ENCODE measurements at regions of chr19 and their contacts with region 1.

Region 1: DNA sequence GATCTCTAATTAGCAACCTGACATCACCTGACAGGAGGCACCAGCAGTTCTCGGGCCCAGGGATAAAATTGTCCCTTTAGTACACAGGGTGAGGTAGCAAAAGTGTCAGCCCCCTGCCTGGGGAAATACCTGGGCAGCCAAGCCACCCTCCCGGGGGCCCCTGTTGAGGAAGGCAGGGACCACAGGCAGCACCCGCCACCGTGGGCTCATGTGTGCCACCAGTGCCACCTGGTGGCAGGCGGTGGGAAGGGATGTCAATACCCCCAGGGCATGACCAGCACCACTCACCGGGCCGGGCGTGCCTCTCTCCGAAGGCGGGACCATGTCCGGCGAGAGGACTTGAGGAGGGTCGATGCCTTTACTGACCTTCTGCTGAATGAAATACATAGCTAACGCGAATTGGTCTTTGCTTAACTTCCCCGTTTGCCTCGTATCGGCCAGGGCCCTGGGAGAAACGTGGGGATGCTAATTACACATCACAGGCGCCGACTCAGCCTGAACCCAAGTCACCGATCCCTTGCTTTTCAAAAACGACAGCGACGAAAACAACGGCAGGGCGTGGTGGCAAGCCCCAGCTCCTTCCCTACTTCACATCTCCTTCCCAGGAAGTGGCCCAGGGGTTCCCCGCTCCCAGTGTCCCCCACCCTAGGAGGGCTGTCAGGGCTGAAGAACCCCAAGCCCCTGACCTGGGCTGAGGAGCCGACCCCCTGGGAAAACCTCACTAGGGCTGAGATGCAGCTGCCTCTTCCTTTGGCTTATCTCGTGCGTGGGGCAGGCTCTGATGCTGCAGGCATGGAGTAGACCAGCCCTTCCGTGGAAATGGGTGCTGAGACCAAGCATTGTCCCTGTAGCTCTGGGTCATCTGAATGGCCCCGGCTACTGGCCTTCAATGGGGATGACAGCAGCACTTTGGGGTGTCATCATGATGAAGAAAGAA is 53.8 kb downstream of the EPS15L1 start:
- DNase-seq: peak; percentile 62 to 82 (median 66)
- ATAC-seq: peak; percentile 93
- H3K4me3 ChIP-seq: no peak overlapping the region
- H3K4me3 Mint-ChIP-seq: no peak overlapping the region
- H3K27ac ChIP-seq: no peak overlapping the region
- H3K27ac Mint-ChIP-seq: peak overlapping the region in 5 of 9 donors; percentile 28 to 72 (median 63)
- H3K4me1 ChIP-seq: no peaks in the 10 kb centered on the region
- H3K4me1 Mint-ChIP-seq: peaks cover 2 to 14% (median 6%) of the 10 kb centered on the region in 7 donors
- H3K27me3 ChIP-seq: no peaks in the 10 kb centered on the region
- H3K27me3 Mint-ChIP-seq: no peaks in the 10 kb centered on the region

Region 2: DNA sequence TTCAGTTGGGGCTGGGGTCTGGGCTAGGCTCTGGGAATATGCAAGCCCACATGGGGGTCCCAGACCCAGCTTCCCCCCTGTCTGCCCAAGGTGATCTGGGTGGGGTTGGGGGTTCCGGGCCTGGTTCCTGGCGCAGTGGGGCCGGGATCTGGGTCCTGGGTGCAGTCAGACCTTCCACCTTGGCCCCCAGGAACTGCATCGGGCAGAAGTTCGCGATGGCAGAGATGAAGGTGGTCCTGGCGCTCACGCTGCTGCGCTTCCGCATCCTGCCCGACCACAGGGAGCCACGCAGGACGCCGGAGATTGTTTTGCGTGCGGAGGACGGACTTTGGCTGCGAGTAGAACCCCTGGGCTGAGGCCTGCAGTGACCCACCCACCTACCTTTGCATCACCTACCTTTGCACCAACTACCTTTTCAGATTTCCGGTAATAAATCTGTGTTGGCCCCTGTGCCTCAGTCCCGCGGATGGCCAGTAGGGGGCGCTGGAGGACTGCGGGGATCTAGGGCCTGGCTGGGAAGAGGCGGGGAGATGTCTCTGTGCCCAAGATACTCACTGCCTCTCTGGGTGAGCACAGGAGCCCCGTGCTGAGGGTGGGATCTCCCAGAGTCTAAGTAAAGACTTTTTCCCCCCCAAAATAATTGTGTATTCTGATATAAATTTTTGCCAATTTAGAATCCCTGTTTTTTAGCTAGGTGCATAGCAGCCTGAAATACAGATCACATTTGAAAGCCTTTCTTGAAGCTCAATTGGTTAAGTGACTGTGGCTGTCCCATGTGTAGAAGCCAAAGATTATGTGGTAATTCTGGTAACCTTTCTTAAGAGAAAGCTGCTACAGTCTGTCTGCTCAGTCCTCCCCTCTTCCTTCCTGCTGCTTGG is 788.7 kb before region 1 on chr19:
- CTCF ChIA-PET with region 1: no interaction called
- POLR2A ChIA-PET with region 1: no interaction called
- intact Hi-C with region 1: loop called in 1 of 2 experiments (anchors 10 kb)
- DNase-seq: peak; percentile 74 to 94 (median 85)
- ATAC-seq: peak; percentile 98
- H3K4me3 ChIP-seq: no peak overlapping the region
- H3K4me3 Mint-ChIP-seq: peak overlapping the region in 2 of 10 donors; percentile 6 to 37
- H3K27ac ChIP-seq: no peak overlapping the region
- H3K27ac Mint-ChIP-seq: peak overlapping the region in 1 of 9 donors; percentile 67
- H3K4me1 ChIP-seq: peaks cover 0 to 6% of the 10 kb centered on the region in 2 donors
- H3K4me1 Mint-ChIP-seq: no peaks in the 10 kb centered on the region
- H3K27me3 ChIP-seq: no peaks in the 10 kb centered on the region
- H3K27me3 Mint-ChIP-seq: peaks cover 5 to 43% (median 32%) of the 10 kb centered on the region in 5 donors

Region 3: DNA sequence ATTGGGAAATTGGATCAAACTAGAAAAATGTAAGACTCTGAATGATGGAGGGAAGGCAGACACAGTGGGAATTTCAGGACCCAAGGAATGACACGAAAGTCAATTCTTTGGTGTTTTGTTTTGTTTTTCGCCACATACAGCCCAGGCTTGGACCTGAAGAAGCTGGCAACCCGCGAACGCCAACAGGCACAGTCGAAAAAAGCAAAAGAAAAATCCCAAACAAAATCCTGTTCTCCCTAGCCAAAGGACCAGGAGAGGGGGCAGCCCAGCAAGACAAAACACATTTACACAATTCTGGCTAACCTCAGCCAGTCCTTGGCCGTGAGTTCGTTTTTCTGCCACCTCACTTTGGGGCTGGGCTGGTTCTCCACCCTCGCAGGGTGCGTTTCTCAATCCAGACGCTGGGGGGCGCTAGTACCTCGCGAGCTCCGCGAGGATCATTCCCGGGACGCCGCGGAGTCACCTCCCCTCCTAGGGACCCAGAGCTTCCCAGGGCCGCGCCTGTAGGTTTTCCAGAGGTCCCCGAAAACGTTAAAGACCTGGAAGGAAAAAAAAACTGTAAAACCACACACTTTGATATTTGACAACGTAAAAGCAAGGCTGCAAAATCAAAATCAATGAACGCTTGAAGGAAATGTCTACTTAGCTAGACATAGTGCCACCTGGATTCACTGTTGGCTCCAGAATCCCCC is 376.5 kb before region 1 on chr19:
- CTCF ChIA-PET with region 1: interaction called, 6 read pairs
- POLR2A ChIA-PET with region 1: interaction called, 4 read pairs
- intact Hi-C with region 1: loop called (anchors 1 kb)
- DNase-seq: peak; percentile 47 to 85 (median 67)
- ATAC-seq: peak; percentile 90
- H3K4me3 ChIP-seq: no peak overlapping the region
- H3K4me3 Mint-ChIP-seq: peak overlapping the region; percentile 23 to 76 (median 50)
- H3K27ac ChIP-seq: no peak overlapping the region
- H3K27ac Mint-ChIP-seq: peak overlapping the region in 2 of 9 donors; percentile 15 to 49
- H3K4me1 ChIP-seq: peaks cover 0 to 7% of the 10 kb centered on the region in 2 donors
- H3K4me1 Mint-ChIP-seq: peaks cover 6 to 22% (median 15%) of the 10 kb centered on the region in 7 donors
- H3K27me3 ChIP-seq: no peaks in the 10 kb centered on the region
- H3K27me3 Mint-ChIP-seq: peaks cover 0 to 23% (median 0%) of the 10 kb centered on the region in 5 donors

Region 4: DNA sequence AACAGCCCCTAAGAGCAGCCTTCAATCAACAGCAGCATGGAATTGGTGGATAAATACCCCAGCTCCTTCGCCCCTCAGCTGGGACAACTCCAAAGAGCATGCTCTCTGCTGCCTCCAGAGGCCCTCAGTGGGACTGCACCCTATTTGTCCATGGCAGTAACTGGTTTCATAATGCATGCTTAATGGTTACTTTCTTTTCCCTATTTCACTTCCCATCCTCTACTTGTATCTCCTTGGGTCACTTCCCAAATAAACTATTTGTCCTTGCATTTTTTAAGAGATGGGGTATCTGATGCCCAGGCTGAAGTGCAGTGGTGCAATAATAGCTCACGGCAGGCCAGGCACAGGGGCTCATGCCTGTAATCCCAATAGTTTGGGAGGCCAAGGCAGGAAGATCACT is 355.1 kb before region 1 on chr19:
- CTCF ChIA-PET with region 1: interaction called, 4 read pairs
- POLR2A ChIA-PET with region 1: no interaction called
- intact Hi-C with region 1: loop called in 1 of 2 experiments (anchors 1 kb)
- DNase-seq: peak; percentile 32 to 77 (median 63)
- ATAC-seq: peak; percentile 89
- H3K4me3 ChIP-seq: no peak overlapping the region
- H3K4me3 Mint-ChIP-seq: peak overlapping the region in 1 of 10 donors; percentile 37
- H3K27ac ChIP-seq: no peak overlapping the region
- H3K27ac Mint-ChIP-seq: peak overlapping the region in 2 of 9 donors; percentile 3 to 24
- H3K4me1 ChIP-seq: peaks cover 0 to 4% of the 10 kb centered on the region in 2 donors
- H3K4me1 Mint-ChIP-seq: peaks cover 15 to 27% (median 21%) of the 10 kb centered on the region in 7 donors
- H3K27me3 ChIP-seq: no peaks in the 10 kb centered on the region
- H3K27me3 Mint-ChIP-seq: peaks cover 0 to 10% (median 0%) of the 10 kb centered on the region in 5 donors

Region 5: DNA sequence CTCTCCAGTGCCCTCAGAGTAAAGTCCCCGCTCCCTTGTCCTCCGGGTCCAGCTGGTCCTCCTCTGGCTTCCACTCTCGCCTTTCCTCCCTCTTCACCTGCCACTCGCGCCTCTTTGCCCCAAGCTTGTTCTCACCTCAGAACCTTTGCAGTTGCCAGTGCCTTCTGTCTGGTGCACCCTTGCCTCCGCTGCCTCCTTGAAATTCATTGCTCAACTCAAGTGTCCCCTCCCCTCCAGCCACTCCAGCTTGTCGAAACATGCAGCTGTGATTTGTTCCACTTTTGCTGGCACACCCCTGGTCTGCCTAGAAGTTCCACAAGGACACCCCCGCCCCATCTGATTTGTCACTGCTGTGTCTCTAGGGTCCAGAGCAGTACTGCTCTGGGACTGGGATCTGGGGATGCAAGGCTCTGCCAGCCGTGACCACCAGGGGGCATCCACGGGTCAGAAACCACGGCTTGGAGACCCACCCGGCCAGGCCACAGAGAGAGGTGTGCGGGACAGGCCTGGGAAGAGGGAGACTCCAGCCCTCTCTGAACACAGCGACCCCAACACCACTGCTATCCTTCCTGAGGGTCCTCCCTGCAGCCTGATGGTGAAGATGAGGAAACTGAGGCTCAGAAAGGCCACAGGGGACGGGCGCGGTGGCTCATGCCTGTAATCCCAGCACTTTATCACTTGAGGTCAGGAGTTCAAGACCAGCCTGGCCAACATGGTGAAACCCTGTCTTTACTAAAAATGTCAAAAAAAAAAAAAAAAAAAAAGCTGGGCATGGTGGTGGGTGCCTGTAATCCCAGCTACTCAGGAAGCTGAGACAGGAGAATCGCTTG is 170.4 kb before region 1 on chr19:
- CTCF ChIA-PET with region 1: interaction called, 17 read pairs
- POLR2A ChIA-PET with region 1: interaction called, 6 read pairs
- intact Hi-C with region 1: loop called (anchors 1 kb)
- DNase-seq: peak; percentile 60 to 89 (median 77)
- ATAC-seq: peak; percentile 95
- H3K4me3 ChIP-seq: no peak overlapping the region
- H3K4me3 Mint-ChIP-seq: peak overlapping the region; percentile 22 to 71 (median 56)
- H3K27ac ChIP-seq: no peak overlapping the region
- H3K27ac Mint-ChIP-seq: peak overlapping the region; percentile 48 to 94 (median 84)
- H3K4me1 ChIP-seq: peaks cover 15 to 24% of the 10 kb centered on the region in 2 donors
- H3K4me1 Mint-ChIP-seq: peaks cover 17 to 38% (median 36%) of the 10 kb centered on the region in 7 donors
- H3K27me3 ChIP-seq: no peaks in the 10 kb centered on the region
- H3K27me3 Mint-ChIP-seq: peaks cover 0 to 7% (median 0%) of the 10 kb centered on the region in 5 donors

Region 6: GRCh38 chr19:16330368-16330801 is 87.5 kb before region 1 on chr19:
- CTCF ChIA-PET with region 1: no interaction called
- POLR2A ChIA-PET with region 1: interaction called, 16 read pairs
- intact Hi-C with region 1: no loop called
- DNase-seq: peak; percentile 76 to 96 (median 92)
- ATAC-seq: peak; percentile 74
- H3K4me3 ChIP-seq: no peak overlapping the region
- H3K4me3 Mint-ChIP-seq: peak overlapping the region; percentile 89 to 99 (median 97)
- H3K27ac ChIP-seq: peak overlapping the region; percentile 98
- H3K27ac Mint-ChIP-seq: peak overlapping the region; percentile 95 to 100 (median 98)
- H3K4me1 ChIP-seq: peaks cover 21 to 37% of the 10 kb centered on the region in 2 donors
- H3K4me1 Mint-ChIP-seq: peaks cover 17 to 62% (median 44%) of the 10 kb centered on the region in 7 donors
- H3K27me3 ChIP-seq: no peaks in the 10 kb centered on the region
- H3K27me3 Mint-ChIP-seq: peaks cover 0 to 36% (median 0%) of the 10 kb centered on the region in 5 donors

Region 7: DNA sequence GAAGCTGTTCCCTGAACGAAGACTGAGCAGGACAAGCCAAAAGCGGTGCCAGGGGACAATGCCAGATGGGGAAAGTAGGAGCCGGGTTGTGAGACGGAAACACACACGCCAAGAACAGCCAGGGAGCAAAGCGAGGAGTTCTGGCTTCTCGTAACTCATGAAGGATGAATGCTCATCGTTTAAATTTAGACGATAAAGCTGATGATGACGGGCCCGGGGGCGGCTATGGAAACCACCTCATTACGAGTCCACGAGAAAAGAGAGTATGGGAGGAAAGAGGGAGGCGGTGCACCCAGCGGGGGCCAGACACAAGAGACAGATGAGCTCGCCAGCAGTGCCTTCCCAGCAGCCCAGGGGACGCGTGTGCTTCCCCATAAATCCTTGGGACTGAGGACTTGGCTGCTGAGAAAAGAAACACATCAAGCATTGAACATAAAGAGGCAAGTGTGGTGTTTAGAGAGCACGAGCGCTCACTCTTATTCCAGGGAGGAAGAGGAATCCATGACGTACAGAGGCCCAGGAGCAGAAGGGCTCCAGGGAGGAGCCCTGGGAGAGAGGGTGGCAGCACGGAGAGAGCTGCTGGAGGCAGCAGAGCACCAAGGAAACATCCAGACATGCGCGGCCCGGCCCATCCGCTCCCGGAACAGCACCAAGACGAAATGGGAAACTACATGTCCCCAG is 16.9 kb before region 1 on chr19:
- CTCF ChIA-PET with region 1: interaction called, 6 read pairs
- POLR2A ChIA-PET with region 1: no interaction called
- intact Hi-C with region 1: loop called in 1 of 2 experiments (anchors 1 kb)
- DNase-seq: no peak
- ATAC-seq: no peak
- H3K4me3 ChIP-seq: no peak overlapping the region
- H3K4me3 Mint-ChIP-seq: no peak overlapping the region
- H3K27ac ChIP-seq: no peak overlapping the region
- H3K27ac Mint-ChIP-seq: peak overlapping the region in 8 of 9 donors; percentile 45 to 88 (median 78)
- H3K4me1 ChIP-seq: peaks cover 0 to 17% of the 10 kb centered on the region in 2 donors
- H3K4me1 Mint-ChIP-seq: peaks cover 0 to 33% (median 19%) of the 10 kb centered on the region in 7 donors
- H3K27me3 ChIP-seq: no peaks in the 10 kb centered on the region
- H3K27me3 Mint-ChIP-seq: no peaks in the 10 kb centered on the region

Region 8: GRCh38 chr19:16702118-16702517 is 284.2 kb after region 1 on chr19:
- CTCF ChIA-PET with region 1: no interaction called
- POLR2A ChIA-PET with region 1: no interaction called
- intact Hi-C with region 1: no loop called
- DNase-seq: no peak
- ATAC-seq: no peak
- H3K4me3 ChIP-seq: no peak overlapping the region
- H3K4me3 Mint-ChIP-seq: no peak overlapping the region
- H3K27ac ChIP-seq: no peak overlapping the region
- H3K27ac Mint-ChIP-seq: no peak overlapping the region
- H3K4me1 ChIP-seq: no peaks in the 10 kb centered on the region
- H3K4me1 Mint-ChIP-seq: no peaks in the 10 kb centered on the region
- H3K27me3 ChIP-seq: no peaks in the 10 kb centered on the region
- H3K27me3 Mint-ChIP-seq: no peaks in the 10 kb centered on the region